Activated T-helper 1 cell treated with anti-CD3 and anti-CD28 coated beads, Interleukin-12 subunit alpha, Interleukin-12 subunit beta, Interleukin-2, Interleukin-4 antibody, amounts not matched to agents 30 ng/mL and 10 ng/mL and 1 ng/mL, durations not matched to agents 14 hours and 24 hours and 36 hours (primary cell): ENCODE measurements at regions of chr11 and their contacts with region 1.

Region 1: GRCh38 chr11:119666463-119667131 is 62.4 kb downstream of the NECTIN1 start:
- DNase-seq: peak; percentile 38
- H3K4me3 Mint-ChIP-seq: no peak overlapping the region
- H3K27ac Mint-ChIP-seq: no peak overlapping the region
- H3K4me1 Mint-ChIP-seq: no peaks in the 10 kb centered on the region
- H3K27me3 Mint-ChIP-seq: no peaks in the 10 kb centered on the region

Region 2: DNA sequence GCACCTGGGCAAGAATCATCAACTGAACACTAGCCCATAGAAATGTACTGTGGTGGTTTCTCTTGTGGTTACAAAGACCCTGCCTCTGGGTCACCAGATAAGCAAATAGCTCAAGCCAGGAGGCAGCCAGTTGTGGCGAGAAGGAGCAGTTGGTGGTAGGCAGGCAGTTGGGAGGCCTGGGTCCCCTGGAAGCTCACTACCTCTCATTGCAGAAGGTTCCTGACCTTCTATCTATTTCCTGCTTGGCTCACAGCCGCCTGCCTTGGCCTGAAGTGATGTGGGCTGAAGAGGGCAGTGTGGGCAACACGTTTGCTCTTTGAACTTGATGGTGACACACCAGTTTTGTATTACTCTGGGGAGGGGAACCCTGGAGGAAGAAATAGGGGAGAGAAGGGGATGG is 27.7 kb after region 1 on chr11:
- intact Hi-C with region 1: no loop called
- DNase-seq: no peak
- H3K4me3 Mint-ChIP-seq: no peak overlapping the region
- H3K27ac Mint-ChIP-seq: no peak overlapping the region
- H3K4me1 Mint-ChIP-seq: peaks cover 11% of the 10 kb centered on the region
- H3K27me3 Mint-ChIP-seq: no peaks in the 10 kb centered on the region

Region 3: DNA sequence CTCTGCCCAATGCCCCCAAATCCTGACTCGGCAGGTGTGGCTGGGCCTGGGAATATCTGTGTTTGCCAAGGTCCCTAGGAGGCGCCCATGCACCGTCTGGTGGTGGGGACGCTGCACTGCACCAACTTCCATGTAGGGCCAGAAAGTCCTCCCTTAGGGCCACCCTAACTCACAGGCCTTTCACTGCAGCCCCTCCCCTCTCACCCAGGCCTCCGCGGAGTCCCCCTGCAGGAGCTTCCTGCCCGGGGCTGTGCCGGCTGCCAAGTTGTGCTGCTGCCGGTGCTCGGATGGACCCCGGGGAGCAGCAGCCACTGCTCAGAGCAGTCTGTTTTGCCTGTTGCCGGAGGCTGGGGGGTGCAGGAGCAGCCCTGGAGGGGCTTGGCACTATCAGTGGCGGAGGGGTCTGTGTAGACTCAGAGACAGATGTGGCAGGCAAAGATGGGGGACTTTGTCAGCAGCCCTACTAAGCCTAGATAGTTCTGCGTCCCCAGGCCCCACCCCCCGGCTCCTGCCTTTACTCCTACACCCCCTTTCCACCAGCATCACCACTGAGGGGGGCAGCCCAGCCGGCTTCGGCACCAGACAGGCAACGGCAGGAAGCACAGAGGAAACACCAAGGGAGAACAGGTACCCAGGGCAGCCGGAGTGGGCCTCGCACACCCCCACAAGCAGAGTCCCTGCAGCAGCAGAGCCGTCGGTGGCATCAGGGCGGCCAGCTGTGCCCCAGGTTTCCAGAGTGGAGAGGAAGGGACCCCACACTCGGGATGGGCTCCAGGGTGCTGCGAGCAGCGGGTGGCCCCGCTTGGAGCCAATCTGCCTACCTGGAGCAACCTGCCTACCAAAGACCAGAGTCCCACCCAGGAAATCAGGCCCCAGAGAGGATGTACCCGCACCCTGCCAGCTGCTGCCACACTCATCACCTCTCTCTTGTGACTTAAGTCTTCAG is 347.0 kb after region 1 on chr11:
- intact Hi-C with region 1: loop called (anchors 2 kb)
- DNase-seq: no peak
- H3K4me3 Mint-ChIP-seq: no peak overlapping the region
- H3K27ac Mint-ChIP-seq: no peak overlapping the region
- H3K4me1 Mint-ChIP-seq: no peaks in the 10 kb centered on the region
- H3K27me3 Mint-ChIP-seq: peaks cover 19% of the 10 kb centered on the region